ENCODE measurements at regions of chr11 and their contacts with region 1.

Region 1: GRCh38 chr11:119666463-119667131 is 62.4 kb downstream of the NECTIN1 start:
- DNase-seq: peak; percentile 89
- ATAC-seq: peak; percentile 95

Region 2: DNA sequence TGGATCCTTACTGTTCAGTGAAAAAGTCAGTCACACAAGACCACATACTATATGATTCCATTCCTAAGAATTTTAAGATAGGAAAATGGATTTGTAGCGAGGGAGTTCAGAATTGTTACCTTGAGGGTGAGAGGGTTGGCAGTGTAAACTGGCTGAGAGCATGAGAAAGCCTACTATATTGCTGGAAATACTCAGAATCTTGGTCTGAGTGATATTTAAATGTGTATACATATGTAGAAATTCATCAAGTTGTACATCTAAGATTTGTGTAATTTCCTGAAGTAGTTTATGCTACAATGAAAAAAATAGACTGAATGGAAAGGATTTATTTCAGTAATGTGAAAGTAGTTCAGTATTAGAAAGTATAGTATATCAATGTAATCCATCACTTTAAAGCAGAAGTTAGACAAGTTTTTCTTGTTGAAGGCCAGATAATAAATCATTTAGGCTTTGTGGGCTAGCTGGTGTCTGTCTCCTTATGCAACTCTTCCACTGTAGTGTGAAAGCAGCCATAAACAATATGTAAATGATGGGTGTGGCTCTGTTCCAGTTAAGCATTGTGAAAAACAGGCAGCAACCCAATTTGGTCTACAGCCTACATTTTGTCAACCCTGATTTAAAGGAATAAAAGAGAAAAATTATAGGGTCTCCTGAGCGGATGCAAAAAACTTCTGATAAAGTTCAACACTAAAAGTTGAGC is 116.4 kb before region 1 on chr11:
- intact Hi-C with region 1: no loop called
- DNase-seq: no peak
- ATAC-seq: no peak

Region 3: GRCh38 chr11:119709638-119710346 is 43.2 kb after region 1 on chr11:
- intact Hi-C with region 1: no loop called
- DNase-seq: no peak
- ATAC-seq: peak; percentile 42

Region 4: DNA sequence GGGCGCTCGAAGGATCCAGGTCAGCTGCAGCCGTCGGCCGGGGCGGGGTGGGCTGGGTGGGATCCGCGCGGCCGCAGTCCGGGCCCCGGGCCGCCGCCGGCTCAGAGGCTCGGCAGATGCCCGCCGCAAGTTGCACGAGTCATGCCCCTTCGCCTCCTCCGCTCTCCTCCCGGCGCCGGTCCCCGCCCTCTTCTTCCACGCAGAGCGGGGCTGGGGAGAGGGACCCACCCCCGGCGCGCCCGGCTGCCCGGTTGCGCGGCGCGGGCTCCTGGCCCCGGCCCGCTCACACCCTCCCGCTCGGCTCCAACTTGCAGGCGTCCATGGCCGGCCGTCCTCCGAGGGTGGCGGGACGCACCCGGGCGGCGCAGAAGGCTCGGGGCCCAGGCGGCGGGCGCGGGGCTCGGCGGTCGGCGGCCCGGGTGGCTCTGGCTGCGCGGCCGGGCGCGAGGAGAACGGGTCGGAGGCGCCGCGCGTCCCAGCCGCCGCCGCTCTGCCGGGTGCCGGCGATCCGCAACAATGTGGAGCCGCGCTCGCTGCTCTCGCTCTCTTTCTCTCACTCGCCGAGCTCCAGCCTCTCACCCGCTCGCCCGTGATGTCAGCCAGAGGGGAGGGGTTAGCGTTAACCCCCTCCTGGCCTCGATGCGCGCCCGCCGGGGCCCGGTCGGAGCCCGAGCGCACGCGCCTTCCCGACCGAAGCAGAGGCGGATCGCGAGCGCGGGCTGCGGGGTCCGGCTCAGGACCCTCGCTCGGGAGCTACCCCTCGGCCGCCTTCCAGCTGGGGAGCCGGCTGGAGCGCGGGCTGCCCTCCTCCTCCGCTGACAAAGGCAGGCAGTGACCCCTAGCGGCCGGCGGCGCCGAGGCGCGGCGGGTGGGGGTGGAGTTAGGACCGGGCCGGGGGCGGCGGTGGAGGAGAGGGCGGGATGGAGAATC is 62.3 kb after region 1 on chr11 and contains the start of gene NECTIN1:
- intact Hi-C with region 1: loop called (anchors 5 kb)
- DNase-seq: peak; percentile 93
- ATAC-seq: peak; percentile 96
- total RNA-seq, gene NECTIN1: 15.0 TPM

Region 5: GRCh38 chr11:120013325-120014270 is 347.0 kb after region 1 on chr11:
- intact Hi-C with region 1: loop called (anchors 5 kb)
- DNase-seq: peak; percentile 71
- ATAC-seq: peak; percentile 85